OCI-LY7 (cell line): ENCODE measurements at regions of chr3 and their contacts with region 1.

Region 1: GRCh38 chr3:183527428-183528379 is 27.8 kb downstream of the KLHL6 start:
- DNase-seq: peak; percentile 60
- H3K4me3 ChIP-seq: peak overlapping the region; percentile 1
- H3K27ac ChIP-seq: peak overlapping the region; percentile 53
- H3K4me1 ChIP-seq: peaks cover 72% of the 10 kb centered on the region
- CTCF ChIP-seq: no peak

Region 2: DNA sequence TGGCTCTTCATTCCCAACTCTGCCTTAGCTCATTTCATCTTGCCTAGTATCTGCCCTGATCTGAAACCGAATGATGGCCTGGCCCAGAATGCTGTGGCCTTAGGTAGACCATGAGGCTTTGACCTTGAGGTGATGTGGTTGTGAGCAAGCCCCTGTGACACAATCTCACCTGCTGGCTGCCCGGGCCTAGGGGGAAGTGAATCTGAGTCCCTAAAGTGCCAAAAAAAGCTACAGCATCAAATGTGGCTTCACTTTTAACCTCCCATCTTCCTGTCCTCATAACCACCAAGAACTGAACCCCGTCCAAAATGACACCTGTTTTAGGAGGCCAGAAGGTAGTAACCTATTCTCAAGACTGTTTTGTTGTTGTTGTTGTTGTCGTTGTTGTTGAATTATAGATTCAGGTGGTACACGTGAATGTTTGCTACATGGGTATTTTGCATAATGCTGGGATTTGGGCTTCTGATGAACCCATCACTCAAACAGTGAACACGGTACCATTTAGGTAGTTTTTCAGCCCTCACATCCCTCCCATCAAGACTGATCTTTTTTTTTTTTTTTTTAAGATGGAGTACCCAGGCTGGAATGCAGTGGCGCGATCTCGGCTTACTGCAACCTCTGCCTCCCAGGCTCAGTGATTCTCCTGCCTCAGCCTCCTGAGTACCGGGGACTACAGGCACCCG is 483.0 kb before region 1 on chr3:
- CTCF ChIA-PET with region 1: no interaction called
- POLR2A ChIA-PET with region 1: no interaction called
- intact Hi-C with region 1: no loop called
- DNase-seq: peak; percentile 93
- H3K4me3 ChIP-seq: peak overlapping the region; percentile 51
- H3K27ac ChIP-seq: peak overlapping the region; percentile 95
- H3K4me1 ChIP-seq: peaks cover 64% of the 10 kb centered on the region
- CTCF ChIP-seq: no peak

Region 3: DNA sequence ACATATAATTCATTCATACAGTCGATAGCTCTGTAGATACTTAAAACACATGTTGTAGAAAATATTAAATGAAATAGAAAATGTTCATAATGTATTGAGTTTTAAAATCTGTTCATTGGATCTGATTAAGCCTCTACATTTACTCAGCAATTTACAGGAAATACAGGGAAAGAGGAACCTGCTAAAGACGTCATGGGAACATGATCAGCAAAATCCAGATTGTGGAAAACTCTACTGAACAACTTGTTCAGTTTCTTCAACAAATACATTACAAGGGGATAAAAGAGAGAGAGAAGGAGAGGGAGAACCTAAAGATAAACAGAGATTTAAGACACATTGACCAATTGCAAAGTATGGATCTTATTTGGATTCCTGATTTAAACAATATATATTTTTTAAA is 18.9 kb before region 1 on chr3:
- CTCF ChIA-PET with region 1: no interaction called
- POLR2A ChIA-PET with region 1: interaction called, 14 read pairs
- intact Hi-C with region 1: no loop called
- DNase-seq: no peak
- H3K4me3 ChIP-seq: no peak overlapping the region
- H3K27ac ChIP-seq: peak overlapping the region; percentile 48
- H3K4me1 ChIP-seq: peaks cover 81% of the 10 kb centered on the region
- CTCF ChIP-seq: no peak